Natural killer cell (primary cell): ENCODE measurements at regions of chr17 and their contacts with region 1.

Region 1: DNA sequence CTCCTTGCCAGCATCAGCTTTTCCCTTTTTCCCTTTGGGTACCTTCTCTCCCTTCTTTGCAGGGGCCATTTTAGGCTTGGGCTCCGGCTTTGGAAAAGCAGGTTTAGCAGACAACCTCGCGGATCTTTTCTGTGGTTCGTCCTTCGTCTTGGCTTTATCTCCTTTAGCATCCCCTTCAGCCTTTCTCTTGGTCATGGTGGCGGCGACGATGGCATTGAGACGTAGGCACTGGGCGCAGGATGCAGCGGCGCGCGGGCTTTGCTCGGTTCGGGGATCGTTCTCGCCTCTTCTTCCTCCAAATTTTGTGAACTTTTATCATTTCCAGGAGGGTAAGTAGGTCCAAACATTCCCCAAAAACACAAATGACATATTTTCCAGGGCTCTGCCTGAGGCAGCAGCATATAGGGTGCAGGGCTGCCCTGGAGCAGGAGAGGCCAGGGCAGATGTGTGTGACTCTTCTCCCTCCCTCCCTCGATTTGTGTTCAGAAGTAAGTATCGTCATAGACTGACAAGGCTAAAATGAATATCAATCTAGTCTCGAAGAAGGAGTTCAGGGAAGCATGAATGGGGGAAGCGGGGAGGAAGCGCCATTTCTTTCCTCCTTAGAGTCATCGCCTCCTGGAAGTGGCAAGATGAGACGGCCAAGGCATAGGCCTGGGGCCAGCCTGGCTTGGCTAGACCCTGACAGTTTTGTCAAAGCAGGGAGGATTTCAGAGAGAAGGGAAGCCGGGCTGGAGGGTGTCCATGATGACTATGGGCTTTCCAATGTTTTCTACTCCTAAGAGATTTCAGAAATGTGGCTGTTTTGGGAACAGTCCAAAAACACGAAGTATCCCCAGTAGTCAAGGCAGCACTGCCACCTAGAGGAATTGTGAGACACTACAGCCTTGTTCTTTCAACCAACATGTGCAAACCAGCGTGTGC is 13.2 kb downstream of the CHCT1 start:
- DNase-seq: peak; percentile 27 to 84
- ATAC-seq: peak; percentile 78 to 84 (median 82)
- H3K4me3 ChIP-seq: no peak overlapping the region
- H3K4me3 Mint-ChIP-seq: no peak overlapping the region
- H3K27ac ChIP-seq: no peak overlapping the region
- H3K27ac Mint-ChIP-seq: no peak overlapping the region
- H3K4me1 ChIP-seq: no peaks in the 10 kb centered on the region
- H3K4me1 Mint-ChIP-seq: peaks cover 0 to 6% of the 10 kb centered on the region in 2 donors
- H3K27me3 ChIP-seq: no peaks in the 10 kb centered on the region
- H3K27me3 Mint-ChIP-seq: peaks cover 4 to 19% of the 10 kb centered on the region in 2 donors
- CTCF ChIP-seq: peak; percentile 85

Region 2: DNA sequence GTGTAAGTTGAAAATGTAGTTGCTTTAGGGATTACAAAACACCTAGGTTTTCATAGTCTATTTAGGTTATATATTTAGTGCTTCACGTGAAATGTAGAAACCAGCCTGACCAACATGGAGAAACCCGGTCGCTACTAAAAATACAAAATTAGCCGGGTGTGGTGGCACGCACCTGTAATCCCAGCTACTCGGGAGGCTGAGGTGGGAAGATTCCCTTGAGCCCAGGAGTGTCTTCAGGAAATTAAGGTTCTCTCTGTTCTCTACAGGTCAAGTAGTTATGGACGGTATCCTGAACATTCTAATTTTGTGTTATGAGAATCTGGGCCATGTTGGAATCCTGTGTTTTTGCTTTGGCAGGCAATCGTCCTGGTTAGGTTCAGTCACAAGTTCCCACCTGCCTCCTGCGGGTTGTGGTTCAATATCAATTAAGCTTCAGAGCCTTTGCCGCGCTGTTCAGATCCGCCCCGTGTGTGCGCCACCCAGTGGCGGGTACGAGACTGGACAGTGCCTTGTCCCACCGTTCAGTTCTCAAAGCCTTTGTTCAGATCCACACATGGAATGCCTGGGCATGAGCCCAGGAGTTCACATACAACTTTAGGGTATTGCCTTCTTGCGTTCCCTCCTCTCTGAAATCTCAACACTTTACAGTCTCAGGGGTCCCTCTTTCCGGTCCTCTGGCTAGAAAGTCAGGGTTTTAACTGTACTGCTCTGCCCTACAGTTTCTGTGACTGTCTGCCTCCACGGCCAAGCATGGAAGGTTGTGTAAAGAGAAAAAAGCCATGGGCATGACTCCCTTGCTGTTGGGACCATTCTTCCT is 398.5 kb before region 1 on chr17:
- intact Hi-C with region 1: loop called (anchors 5 kb)
- DNase-seq: peak; percentile 56 to 85
- ATAC-seq: peak; percentile 86 to 95 (median 91)
- H3K4me3 ChIP-seq: no peak overlapping the region
- H3K4me3 Mint-ChIP-seq: no peak overlapping the region
- H3K27ac ChIP-seq: no peak overlapping the region
- H3K27ac Mint-ChIP-seq: no peak overlapping the region
- H3K4me1 ChIP-seq: peaks cover 4% of the 10 kb centered on the region
- H3K4me1 Mint-ChIP-seq: peaks cover 5 to 6% of the 10 kb centered on the region in 2 donors
- H3K27me3 ChIP-seq: no peaks in the 10 kb centered on the region
- H3K27me3 Mint-ChIP-seq: peaks cover 6 to 14% of the 10 kb centered on the region in 2 donors
- CTCF ChIP-seq: peak; percentile 86

Region 3: GRCh38 chr17:60142872-60143499 is 292.5 kb before region 1 on chr17:
- intact Hi-C with region 1: loop called (anchors 1 kb)
- DNase-seq: peak; percentile 49 to 81
- ATAC-seq: peak; percentile 74 to 81 (median 76)
- H3K4me3 ChIP-seq: no peak overlapping the region
- H3K4me3 Mint-ChIP-seq: no peak overlapping the region
- H3K27ac ChIP-seq: no peak overlapping the region
- H3K27ac Mint-ChIP-seq: no peak overlapping the region
- H3K4me1 ChIP-seq: peaks cover 16% of the 10 kb centered on the region
- H3K4me1 Mint-ChIP-seq: peaks cover 10 to 12% of the 10 kb centered on the region in 2 donors
- H3K27me3 ChIP-seq: peaks cover 52% of the 10 kb centered on the region
- H3K27me3 Mint-ChIP-seq: peaks cover 63 to 77% of the 10 kb centered on the region in 2 donors
- CTCF ChIP-seq: peak; percentile 54

Region 4: DNA sequence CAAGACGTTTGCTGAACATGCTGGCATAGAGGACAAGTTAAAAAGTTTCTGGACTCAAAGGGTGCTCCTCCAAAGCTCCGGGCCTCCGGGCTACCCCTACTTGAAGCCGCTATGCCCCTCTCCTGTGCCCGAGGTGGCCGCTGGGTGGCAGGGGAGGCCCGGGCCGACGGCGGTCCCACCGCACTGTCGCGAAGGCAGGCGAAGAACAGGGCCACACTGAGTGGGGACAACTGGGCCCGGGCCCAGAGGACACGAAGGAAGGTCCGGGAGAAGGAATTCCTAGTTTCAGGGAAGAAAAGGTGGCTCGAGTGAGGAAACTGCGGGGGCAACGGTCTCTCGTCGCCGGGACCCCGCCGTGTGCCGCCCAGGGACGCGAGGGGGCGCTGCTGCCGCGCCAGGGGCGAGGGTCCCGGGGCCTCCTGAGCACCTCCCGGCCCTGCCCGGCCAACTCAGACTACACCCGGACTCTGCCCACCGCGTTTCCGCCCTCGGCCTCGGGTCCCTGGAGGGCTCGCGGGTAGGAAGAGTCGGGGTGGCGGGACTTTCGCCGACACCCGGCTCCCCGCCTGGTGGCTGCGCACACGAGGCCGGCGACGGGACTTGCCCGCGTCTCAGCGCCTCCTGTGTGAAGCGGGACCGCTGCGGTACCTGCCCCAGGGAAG is 14.1 kb before region 1 on chr17:
- intact Hi-C with region 1: loop called (anchors 1 kb)
- DNase-seq: peak; percentile 70 to 82
- ATAC-seq: peak; percentile 93 to 94 (median 93)
- H3K4me3 ChIP-seq: peak overlapping the region; percentile 56
- H3K4me3 Mint-ChIP-seq: peak overlapping the region; percentile 83
- H3K27ac ChIP-seq: peak overlapping the region; percentile 27
- H3K27ac Mint-ChIP-seq: peak overlapping the region; percentile 21 to 89
- H3K4me1 ChIP-seq: peaks cover 10% of the 10 kb centered on the region
- H3K4me1 Mint-ChIP-seq: peaks cover 11 to 12% of the 10 kb centered on the region in 2 donors
- H3K27me3 ChIP-seq: no peaks in the 10 kb centered on the region
- H3K27me3 Mint-ChIP-seq: peaks cover 0 to 3% of the 10 kb centered on the region in 2 donors
- CTCF ChIP-seq: peak; percentile 100